WTC11 (cell line): ENCODE measurements at regions of chr1 and their contacts with region 1.

Region 1: DNA sequence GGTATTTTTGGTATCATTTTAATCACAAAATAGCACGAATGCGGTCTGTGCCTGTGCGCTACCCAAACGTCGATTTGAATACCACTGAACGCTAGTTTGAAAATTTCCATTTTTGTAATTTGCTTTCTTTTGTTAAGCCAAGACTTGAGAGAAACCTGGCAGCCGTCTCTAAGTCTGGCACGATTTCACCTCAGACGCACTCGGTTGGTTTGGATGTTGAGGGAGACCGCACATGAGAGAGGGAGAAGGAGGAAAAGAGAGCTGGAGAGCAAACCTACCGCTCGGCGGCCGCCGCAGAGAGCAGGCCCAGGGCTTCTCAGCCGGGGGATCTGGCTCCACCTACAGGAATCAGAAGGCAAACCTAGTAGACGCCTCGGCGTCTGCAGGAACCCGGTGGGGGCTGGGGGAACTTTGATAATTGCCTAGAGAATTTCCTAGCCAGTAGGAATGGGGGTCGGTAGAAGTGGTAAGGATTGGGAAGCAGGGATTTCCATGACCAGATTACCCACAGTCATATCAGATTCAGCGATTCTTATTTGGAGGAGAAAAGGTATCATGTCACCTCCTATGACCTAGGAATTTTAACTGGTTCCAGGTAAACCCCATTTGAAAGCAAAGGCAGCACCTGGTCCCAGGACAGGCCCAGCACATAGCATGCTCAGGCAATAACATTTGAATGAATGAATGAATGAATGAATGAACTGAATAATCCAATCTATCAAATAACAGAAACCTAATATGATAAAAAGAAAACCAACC is 83.2 kb downstream of the TM2D1 start:
- DNase-seq: peak; percentile 87
- ATAC-seq: peak; percentile 97
- H3K4me3 Mint-ChIP-seq: peak overlapping the region; percentile 33
- H3K27ac Mint-ChIP-seq: peak overlapping the region; percentile 80; the same call in 1 of the 2 replicates
- H3K4me1 Mint-ChIP-seq: peaks cover 37% of the 10 kb centered on the region
- H3K27me3 Mint-ChIP-seq: peaks cover 12% of the 10 kb centered on the region
- CTCF ChIP-seq: peak; percentile 72

Region 2: GRCh38 chr1:61588736-61589672 is 52.8 kb before region 1 on chr1:
- CTCF ChIA-PET with region 1: interaction called, 27 read pairs
- POLR2A ChIA-PET with region 1: interaction called, 4 read pairs
- DNase-seq: peak; percentile 81
- ATAC-seq: peak; percentile 89
- H3K4me3 Mint-ChIP-seq: 0 out of 2 replicates have a peak overlapping the region, but pooled peaks have one; percentile 17
- H3K27ac Mint-ChIP-seq: peak overlapping the region; percentile 71
- H3K4me1 Mint-ChIP-seq: peaks cover 30% of the 10 kb centered on the region
- H3K27me3 Mint-ChIP-seq: no peaks in the 10 kb centered on the region; the same call in 1 of the 2 replicates
- CTCF ChIP-seq: peak; percentile 85

Region 3: GRCh38 chr1:61654082-61654481 is 12.3 kb after region 1 on chr1:
- CTCF ChIA-PET with region 1: interaction called, 11 read pairs
- POLR2A ChIA-PET with region 1: interaction called, 3 read pairs
- DNase-seq: no peak
- ATAC-seq: no peak
- H3K4me3 Mint-ChIP-seq: no peak overlapping the region
- H3K27ac Mint-ChIP-seq: no peak overlapping the region
- H3K4me1 Mint-ChIP-seq: no peaks in the 10 kb centered on the region
- H3K27me3 Mint-ChIP-seq: no peaks in the 10 kb centered on the region
- CTCF ChIP-seq: no peak

Region 4: DNA sequence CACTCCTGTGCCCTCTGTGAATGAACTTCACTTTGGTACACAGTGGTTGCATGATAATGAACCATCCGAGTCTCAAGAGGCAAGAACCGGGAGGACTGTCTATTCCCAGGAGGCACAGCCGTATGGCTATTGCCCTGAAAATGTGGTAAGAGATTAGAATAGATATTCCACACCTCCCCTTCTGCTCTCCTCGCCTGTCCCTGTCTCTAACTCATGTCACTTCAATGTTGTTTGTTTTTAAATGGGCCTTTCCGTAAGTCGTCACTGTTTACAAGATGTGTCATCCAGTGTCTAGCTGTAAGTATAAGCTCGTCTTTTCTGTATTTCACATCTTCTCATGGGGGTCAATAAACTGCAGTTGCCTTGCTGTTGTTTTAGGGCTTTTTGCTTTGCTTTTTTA is 222.7 kb after region 1 on chr1:
- CTCF ChIA-PET with region 1: no interaction called
- POLR2A ChIA-PET with region 1: no interaction called
- DNase-seq: no peak
- ATAC-seq: no peak
- H3K4me3 Mint-ChIP-seq: no peak overlapping the region
- H3K27ac Mint-ChIP-seq: no peak overlapping the region
- H3K4me1 Mint-ChIP-seq: peaks cover 3% of the 10 kb centered on the region; the same call in 1 of the 2 replicates
- H3K27me3 Mint-ChIP-seq: no peaks in the 10 kb centered on the region
- CTCF ChIP-seq: no peak